ENCODE measurements at regions of chr16 and their contacts with region 1.

Region 1: DNA sequence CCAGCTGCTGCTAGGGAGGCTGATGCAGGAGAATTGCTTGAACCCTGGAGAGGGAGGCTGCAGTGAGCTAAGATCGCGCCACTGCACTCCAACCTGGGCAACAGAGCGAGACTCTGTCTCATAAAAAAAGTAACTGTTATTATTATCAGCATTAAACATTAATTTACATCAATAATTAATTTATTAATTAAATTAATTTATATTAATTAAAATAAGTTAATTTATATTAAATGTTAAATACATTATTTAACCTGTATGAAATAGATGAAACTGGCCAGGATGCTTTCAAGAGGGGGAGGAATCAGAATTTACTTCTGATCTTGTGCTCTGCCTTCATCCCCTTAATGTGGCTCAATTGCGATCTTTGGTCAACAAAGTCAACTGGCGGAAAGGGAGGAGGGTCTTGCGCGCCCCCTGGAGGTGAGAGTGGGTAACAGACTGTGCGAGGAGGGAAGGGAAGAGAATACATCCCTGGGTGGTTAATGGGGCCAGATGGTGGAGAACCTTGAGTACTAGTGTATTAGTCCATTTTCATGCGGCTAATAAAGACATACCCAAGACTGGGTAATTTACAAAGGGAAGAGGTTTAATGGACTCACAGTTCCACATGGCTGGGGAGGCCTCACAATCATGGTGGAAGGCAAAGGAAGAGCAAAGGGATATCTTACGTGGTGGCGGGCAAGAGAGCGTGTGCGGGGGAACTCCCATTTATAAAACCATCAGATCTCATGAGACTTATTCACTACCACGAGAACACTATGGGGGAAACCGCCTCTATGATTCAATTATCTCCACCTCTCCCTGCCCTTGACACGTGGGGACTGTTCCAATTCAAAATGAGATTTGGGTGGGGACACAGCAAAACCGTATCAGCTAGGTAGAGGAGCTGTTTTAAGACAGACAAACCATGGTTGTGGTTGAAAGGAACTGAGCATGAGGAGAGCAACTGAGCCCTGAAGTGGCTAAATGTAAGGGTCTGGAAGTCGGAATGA is 15.7 kb upstream of the CPPED1 start:
- DNase-seq: peak; percentile 92
- H3K4me3 Mint-ChIP-seq: no peak overlapping the region
- H3K27ac Mint-ChIP-seq: no peak overlapping the region
- H3K4me1 Mint-ChIP-seq: peaks cover 12% of the 10 kb centered on the region
- H3K27me3 Mint-ChIP-seq: no peaks in the 10 kb centered on the region

Region 2: DNA sequence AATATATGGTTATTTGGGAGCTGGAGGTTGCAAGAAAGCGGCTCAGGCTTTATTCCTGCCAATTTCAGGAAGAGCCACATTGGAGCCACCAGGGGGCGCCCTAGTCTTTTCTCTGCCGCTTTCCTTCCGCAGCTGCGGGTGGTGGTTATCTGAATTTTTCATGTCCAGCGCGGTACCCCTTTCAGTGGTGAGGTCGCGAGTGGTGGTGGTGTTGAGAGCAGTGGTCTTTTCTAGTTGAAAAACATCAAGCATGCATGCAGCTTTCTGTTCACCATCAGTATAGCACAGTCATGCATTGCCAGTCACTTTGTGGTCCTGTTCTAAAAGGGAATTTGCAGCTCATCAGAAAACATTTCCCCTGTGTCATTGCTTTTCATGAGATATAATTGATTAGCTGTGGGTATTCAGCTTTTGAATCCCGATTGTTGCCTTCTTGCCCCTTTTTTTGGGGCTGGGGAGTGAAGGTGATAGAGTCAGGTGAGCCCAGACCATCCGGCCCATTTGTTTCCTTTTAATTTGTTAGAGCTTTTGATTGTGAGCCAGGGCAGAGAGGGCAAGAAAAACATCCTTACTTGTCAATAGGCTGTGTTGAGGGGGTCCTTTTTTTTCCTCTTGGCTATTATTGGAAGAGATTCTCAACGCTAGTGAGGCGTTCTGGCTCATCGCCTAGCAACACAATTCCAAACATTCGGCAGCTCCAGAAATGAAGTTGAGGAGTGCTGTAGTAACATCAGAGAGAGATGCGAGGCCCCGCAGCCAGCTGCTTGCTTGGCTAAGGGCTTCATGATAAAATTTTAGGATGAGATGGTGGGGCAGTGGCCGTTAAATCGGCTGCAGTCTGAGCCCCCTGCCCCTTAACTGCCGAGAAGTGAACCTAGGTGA is 723.9 kb before region 1 on chr16:
- intact Hi-C with region 1: loop called (anchors 2 kb)
- DNase-seq: peak; percentile 88
- H3K4me3 Mint-ChIP-seq: peak overlapping the region; percentile 59
- H3K27ac Mint-ChIP-seq: no peak overlapping the region
- H3K4me1 Mint-ChIP-seq: peaks cover 2% of the 10 kb centered on the region
- H3K27me3 Mint-ChIP-seq: no peaks in the 10 kb centered on the region

Region 3: DNA sequence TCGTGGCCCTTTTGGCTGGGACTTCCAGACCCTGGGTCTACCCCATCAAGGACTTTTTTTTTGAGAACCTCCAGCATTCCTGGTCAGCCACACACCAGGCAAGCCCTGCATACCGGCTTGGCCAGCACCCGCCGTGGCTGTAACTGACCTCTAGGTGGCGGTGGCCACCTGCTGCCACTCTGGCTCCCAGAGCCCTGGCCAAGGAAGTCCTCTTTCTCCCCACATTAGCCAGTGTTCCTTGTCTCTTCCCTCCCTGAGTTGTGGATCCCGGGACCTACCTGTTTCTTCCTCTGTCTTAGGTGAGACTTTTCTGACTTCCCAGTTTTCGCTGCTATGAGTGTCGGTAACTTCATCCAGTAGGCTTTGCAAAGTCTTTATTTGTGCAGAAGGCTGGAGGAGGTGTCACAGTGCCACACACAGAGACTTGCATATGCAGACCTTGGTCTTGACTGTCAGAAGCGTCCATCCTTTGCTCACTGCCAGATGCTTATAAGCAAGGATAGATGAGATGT is 364.1 kb before region 1 on chr16:
- intact Hi-C with region 1: loop called (anchors 1 kb)
- DNase-seq: peak; percentile 83
- H3K4me3 Mint-ChIP-seq: no peak overlapping the region
- H3K27ac Mint-ChIP-seq: no peak overlapping the region
- H3K4me1 Mint-ChIP-seq: peaks cover 21% of the 10 kb centered on the region
- H3K27me3 Mint-ChIP-seq: no peaks in the 10 kb centered on the region

Region 4: DNA sequence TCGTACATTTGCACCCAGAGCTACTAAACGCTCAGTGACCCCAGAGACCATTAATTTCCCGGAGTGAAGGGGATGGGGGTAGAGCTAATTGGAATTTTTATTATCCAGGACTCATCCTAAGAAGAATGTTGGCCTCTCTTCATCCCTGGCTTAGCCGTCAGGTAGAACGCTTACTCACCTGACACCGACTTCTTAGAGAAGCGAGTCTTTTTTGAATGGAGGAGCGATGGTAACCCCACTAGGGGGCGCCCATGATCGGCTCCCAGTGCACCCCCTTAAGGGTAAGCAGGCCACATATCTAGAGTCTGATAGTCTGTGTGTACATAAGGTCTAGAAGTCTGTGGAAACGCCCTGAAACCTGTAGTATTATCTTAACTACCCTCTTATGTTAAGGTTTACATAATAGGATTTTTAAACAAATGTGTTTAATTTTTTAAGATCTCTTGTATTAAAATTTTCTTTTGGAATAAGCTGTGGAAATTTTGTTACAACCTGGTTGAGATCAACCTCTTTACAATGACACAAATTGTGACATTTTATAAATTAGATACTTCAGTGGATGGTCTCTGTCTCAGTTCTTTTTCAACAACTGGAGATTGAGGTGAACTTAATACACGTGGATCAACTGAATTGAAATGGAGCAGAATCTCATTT is 245.6 kb before region 1 on chr16:
- intact Hi-C with region 1: loop called (anchors 1 kb)
- DNase-seq: peak; percentile 86
- H3K4me3 Mint-ChIP-seq: no peak overlapping the region
- H3K27ac Mint-ChIP-seq: no peak overlapping the region
- H3K4me1 Mint-ChIP-seq: peaks cover 11% of the 10 kb centered on the region
- H3K27me3 Mint-ChIP-seq: no peaks in the 10 kb centered on the region

Region 5: DNA sequence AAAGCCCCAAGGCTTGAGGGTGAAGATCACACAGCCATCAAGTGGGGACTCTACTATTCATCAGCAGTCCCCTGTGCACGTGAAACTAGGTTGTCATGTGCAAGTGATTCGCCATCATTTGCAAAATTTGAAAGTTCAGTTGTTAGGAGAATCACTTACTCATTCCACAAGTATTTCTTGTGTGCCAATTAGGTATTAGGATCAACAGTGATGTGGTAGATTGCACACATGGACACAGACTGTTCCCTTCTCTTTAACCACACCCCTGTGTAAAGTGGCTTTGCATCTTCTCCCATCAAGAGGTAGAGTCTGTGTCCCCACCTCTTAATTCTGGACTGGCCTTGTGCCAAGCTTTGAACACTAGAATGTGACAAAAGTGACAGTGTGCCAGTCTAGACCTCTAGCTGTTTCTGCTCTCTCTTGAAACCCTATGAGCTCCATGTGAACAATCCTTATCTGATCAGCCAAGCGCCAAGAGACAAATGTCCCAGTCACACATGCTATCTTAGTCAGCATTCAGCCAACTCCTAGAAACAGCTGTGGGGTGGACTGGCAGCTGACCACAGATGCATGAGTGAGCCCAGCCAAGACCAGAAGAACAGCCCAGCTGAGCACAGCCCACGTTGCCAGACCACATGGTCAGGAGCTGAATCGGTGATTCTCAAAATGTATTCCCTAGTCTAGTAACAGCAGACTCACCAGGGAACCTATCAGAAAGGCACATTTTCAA is 50.4 kb after region 1 on chr16:
- intact Hi-C with region 1: no loop called
- DNase-seq: no peak
- H3K4me3 Mint-ChIP-seq: no peak overlapping the region
- H3K27ac Mint-ChIP-seq: no peak overlapping the region
- H3K4me1 Mint-ChIP-seq: no peaks in the 10 kb centered on the region
- H3K27me3 Mint-ChIP-seq: peaks cover 4% of the 10 kb centered on the region

Measured in activated CD4-positive, alpha-beta T cell treated with anti-CD3 and anti-CD28 coated beads, Interleukin-2, amount 10 ng/mL, durations not matched to agents 24 days and 14 days (primary cell).